Cardiac septum (tissue), 1 donor: ENCODE measurements at regions of chr2 and their contacts with region 1.

Region 1: DNA sequence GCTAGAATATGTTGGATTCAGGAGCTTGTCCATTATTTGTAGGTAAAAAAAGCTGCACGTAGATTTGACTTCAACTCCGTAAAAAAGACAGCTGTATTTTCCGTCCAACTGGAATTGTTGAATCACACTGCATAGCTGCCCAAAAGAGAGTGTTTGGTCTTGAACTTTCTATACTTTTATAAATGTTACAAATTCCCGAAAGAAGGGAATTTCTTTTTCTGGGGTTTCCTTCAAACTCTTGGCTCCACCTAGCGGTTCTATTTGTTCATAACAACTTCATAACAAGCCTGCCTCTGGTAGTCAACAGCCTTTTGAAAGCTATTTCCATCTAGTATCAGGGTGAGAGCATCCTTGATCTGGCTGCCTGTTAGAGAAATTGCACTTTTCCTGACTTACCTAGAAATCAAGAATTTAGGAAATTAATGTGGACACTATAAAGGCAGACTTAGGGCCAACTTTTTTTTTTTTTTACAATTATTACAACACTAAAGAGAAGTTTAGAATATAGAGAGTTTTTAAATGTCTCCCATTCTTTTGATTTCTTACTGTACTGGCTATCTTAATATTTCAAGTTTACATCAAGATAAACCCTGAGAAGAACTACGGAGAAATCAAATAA is 48.1 kb downstream of the TMEM185B start:
- DNase-seq: no peak

Region 2: GRCh38 chr2:119702918-119703401 is 472.1 kb before region 1 on chr2:
- intact Hi-C with region 1: loop called (anchors 5 kb)
- DNase-seq: peak; percentile 90

Region 3: DNA sequence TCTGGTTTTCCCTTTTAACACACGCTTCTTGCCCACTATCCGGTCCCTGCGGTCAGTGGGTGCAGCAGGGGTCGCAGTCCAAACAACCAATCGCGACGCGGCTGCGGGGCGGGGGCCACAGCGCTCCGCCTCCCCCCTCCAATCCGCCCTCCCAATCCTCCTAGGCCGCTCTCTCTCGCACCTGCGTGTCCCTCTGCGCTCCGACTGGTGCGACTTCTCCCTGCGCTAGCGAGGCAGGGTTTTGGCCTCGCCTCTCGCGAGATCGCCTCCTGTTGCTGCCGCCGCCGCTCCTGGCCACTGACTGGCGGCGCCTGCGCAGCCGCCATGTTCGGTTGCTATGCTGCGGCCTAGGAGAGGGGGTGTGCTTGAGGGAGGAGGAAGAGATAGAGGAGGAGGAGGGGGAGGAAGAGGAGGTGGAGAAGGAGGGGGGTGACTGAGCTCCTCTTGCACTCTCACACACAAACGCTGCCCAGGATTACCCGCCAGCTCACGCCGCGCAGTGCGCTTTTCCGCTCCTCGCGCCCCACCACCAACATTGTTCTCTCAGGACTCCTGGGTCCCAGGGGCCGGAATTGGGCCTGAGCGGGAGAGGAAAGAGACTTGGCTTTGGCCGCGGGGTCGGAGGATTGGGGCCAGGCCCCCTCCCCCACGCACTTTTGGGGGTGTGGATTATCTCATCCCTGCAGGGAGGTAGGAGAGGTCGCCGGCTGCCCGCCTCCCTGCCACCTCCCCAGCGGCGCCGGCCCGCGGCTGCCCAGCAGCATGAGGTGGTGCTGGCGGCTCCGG is 415.4 kb before region 1 on chr2 and contains the start of gene PTPN4:
- intact Hi-C with region 1: loop called (anchors 5 kb)
- DNase-seq: peak; percentile 97
- total RNA-seq, gene PTPN4: 35.7 TPM

Region 4: GRCh38 chr2:120066800-120067547 is 108.1 kb before region 1 on chr2:
- intact Hi-C with region 1: no loop called
- DNase-seq: no peak

Region 5: GRCh38 chr2:120109186-120110061 is 65.6 kb before region 1 on chr2:
- intact Hi-C with region 1: loop called (anchors 2 kb)
- DNase-seq: no peak

Region 6: DNA sequence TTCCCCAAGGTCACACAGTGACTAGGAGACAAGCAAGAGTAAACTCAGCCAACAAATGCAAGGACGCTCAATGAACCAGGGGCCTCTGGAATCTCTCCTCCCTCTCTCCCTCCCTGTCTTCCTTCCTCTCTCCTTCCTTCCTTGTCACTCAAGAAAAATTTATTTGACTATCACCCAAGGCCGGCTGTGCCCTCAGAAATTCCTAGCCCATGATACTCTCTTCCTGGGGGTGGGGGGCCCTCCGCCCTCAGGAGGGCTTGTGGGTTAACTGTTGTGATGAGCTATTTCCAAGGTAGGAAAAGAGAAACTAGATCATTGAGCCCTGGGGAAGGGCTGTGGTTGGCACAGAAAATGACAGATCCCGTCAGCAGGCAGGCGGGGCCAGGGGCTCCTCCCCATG is 192.6 kb after region 1 on chr2:
- intact Hi-C with region 1: no loop called
- DNase-seq: no peak